ENCODE measurements at regions of chr4 and their contacts with region 1.

Region 1: GRCh38 chr4:112765317-112765975 is 128.5 kb downstream of the LARP7 start:
- DNase-seq: peak in 1 of 2 experiments; percentile 36
- ATAC-seq: peak; percentile 73 to 86
- H3K4me3 ChIP-seq: no peak overlapping the region
- H3K27ac ChIP-seq: no peak overlapping the region
- H3K4me1 ChIP-seq: no peaks in the 10 kb centered on the region
- CTCF ChIP-seq: peak; percentile 49
- EP300 ChIP-seq: no peak
- POLR2A ChIP-seq: no peak
- RAD21 ChIP-seq: peak; percentile 43 to 48

Region 2: DNA sequence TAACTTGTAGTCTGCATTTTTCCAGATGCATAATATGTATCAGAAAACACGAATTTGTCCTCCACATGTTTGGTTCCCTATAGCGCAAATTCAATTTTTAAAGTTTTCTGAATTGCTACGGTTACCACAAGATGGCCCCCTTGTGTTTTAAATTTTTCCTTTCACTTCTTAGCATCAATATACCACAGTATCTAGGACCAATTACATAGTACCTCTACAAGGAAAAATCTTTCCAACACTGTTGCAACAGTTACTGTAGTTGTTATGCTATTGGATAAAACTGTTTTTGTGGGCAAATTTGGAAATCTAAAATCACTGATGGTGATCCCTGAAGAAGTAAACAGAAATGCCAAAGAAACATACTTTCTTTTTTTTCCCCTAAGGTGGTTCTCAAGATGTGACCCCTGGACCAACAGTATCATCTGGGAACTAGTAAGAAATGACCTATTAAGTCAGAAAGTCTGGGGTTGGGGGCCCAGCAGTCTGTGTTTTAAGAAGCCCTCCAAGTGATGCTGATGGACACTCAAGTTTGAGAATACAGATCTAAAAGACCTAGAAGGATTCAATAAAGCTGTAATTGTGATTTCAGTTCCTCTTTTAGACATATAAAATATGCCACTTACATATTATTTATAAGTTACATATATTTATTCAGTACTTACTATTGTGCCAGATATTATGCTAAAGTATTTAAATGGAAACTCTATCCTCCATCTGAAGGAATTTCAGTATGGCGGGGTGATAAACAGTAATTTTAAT is 131.8 kb before region 1 on chr4:
- CTCF ChIA-PET with region 1: interaction called, 13 read pairs
- POLR2A ChIA-PET with region 1: no interaction called
- DNase-seq: peak; percentile 4 to 11
- ATAC-seq: no peak
- H3K4me3 ChIP-seq: no peak overlapping the region
- H3K27ac ChIP-seq: no peak overlapping the region
- H3K4me1 ChIP-seq: peaks cover 7% of the 10 kb centered on the region; the same call in 1 of the 3 replicates
- CTCF ChIP-seq: peak; percentile 68
- EP300 ChIP-seq: no peak
- POLR2A ChIP-seq: no peak
- RAD21 ChIP-seq: peak; percentile 64 to 66

Region 3: DNA sequence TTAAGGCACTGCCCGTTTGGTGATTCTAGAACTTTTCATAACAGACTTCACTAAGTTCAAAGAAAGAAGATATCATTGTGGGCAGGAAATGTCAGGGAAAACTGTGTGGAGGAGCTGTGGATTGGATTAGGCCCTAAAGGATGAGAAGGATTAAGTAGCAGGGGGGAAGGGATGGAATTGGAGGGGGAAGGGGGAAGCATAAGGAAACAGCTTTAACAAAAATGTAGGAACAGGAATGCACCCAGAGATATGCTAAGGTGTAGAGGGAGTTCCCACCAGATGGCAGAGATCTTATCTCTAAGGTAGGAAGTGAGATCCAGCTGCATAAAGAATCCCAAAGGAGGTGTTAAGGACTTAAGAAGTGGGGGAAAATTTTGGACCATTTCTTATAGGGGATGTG is 14.0 kb before region 1 on chr4:
- CTCF ChIA-PET with region 1: interaction called, 26 read pairs
- POLR2A ChIA-PET with region 1: no interaction called
- DNase-seq: no peak
- ATAC-seq: no peak
- H3K4me3 ChIP-seq: no peak overlapping the region
- H3K27ac ChIP-seq: no peak overlapping the region
- H3K4me1 ChIP-seq: no peaks in the 10 kb centered on the region; the same call in 2 of the 3 replicates
- CTCF ChIP-seq: no peak
- EP300 ChIP-seq: no peak
- POLR2A ChIP-seq: no peak
- RAD21 ChIP-seq: no peak

Region 4: DNA sequence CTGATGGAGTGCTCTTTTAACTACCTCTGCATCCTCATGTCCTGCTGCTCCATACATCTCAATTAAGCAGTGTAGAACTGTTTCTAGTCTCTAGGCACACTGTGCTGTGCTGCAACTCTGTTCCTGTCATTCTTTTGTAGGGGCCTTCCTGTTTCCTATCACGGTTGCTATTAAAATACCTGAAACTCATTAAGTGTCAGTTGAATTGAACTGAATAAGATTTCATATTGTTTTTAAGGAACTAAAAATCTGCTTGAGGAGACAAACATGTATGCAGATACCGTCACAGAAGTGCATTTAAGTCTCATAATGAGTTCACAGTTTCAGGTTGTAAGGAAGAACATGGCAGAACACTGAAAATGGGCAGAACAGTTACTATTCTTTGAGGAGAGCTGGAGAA is 41.6 kb after region 1 on chr4:
- CTCF ChIA-PET with region 1: no interaction called
- POLR2A ChIA-PET with region 1: no interaction called
- DNase-seq: no peak
- ATAC-seq: no peak
- H3K4me3 ChIP-seq: no peak overlapping the region
- H3K27ac ChIP-seq: no peak overlapping the region
- H3K4me1 ChIP-seq: no peaks in the 10 kb centered on the region
- CTCF ChIP-seq: no peak
- EP300 ChIP-seq: no peak
- POLR2A ChIP-seq: no peak
- RAD21 ChIP-seq: no peak

Region 5: GRCh38 chr4:112938461-112939058 is 173.1 kb after region 1 on chr4:
- CTCF ChIA-PET with region 1: interaction called, 22 read pairs
- POLR2A ChIA-PET with region 1: no interaction called
- DNase-seq: peak; percentile 22 to 27
- ATAC-seq: peak in 1 of 2 experiments; percentile 36; a peak in 1 of 6 replicates
- H3K4me3 ChIP-seq: no peak overlapping the region
- H3K27ac ChIP-seq: no peak overlapping the region
- H3K4me1 ChIP-seq: no peaks in the 10 kb centered on the region
- CTCF ChIP-seq: peak; percentile 68
- EP300 ChIP-seq: no peak
- POLR2A ChIP-seq: no peak
- RAD21 ChIP-seq: peak; percentile 63 to 70; a peak in 4 of 5 replicates